ENCODE measurements at regions of chrX and their contacts with region 1.

Region 1: GRCh38 chrX:17876164-17876563 is 15.1 kb upstream of the RAI2 start:
- DNase-seq: peak; percentile 43
- ATAC-seq: peak; percentile 8; the same call in 1 of the 2 replicates
- H3K4me3 ChIP-seq: no peak overlapping the region
- H3K27ac ChIP-seq: no peak overlapping the region
- H3K4me1 ChIP-seq: peaks cover 41% of the 10 kb centered on the region
- H3K27me3 ChIP-seq: no peaks in the 10 kb centered on the region
- CTCF ChIP-seq: 0 out of 2 replicates have a peak, but pooled peaks have one; percentile 19

Region 2: GRCh38 chrX:17697191-17697590 is 179.0 kb before region 1 on chrX:
- CTCF ChIA-PET with region 1: no interaction called
- POLR2A ChIA-PET with region 1: no interaction called
- intact Hi-C with region 1: loop called (anchors 5 kb)
- DNase-seq: peak; percentile 44
- ATAC-seq: peak; percentile 42
- H3K4me3 ChIP-seq: no peak overlapping the region
- H3K27ac ChIP-seq: no peak overlapping the region
- H3K4me1 ChIP-seq: peaks cover 29% of the 10 kb centered on the region
- H3K27me3 ChIP-seq: no peaks in the 10 kb centered on the region
- CTCF ChIP-seq: peak; percentile 53

Region 3: GRCh38 chrX:17788439-17788838 is 87.7 kb before region 1 on chrX:
- CTCF ChIA-PET with region 1: interaction called, 4 read pairs
- POLR2A ChIA-PET with region 1: interaction called, 3 read pairs
- intact Hi-C with region 1: loop called (anchors 5 kb)
- DNase-seq: peak; percentile 74
- ATAC-seq: peak; percentile 88
- H3K4me3 ChIP-seq: no peak overlapping the region
- H3K27ac ChIP-seq: no peak overlapping the region
- H3K4me1 ChIP-seq: peaks cover 11% of the 10 kb centered on the region; the same call in 1 of the 2 replicates
- H3K27me3 ChIP-seq: no peaks in the 10 kb centered on the region
- CTCF ChIP-seq: peak; percentile 87

Region 4: DNA sequence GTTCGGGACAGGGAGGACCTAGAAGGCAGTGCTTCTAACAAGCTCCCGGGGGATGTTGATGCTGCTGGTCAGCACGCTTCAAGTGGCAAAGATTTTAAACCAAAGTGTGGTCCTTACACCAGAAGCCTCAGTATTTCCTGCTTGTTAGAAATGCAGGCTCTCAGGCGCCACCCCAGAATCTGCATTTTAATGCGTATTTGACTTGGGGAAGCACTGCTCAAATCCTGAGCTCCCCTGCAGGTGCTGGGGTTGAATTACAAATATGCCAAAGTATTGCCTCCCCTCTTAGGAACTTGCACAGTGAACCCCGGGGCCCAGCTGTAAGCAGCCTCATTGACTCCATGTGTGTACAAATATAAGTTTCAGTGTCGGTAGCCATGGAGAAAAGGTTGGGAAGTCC is 55.7 kb after region 1 on chrX:
- CTCF ChIA-PET with region 1: no interaction called
- POLR2A ChIA-PET with region 1: no interaction called
- intact Hi-C with region 1: loop called (anchors 2 kb)
- DNase-seq: no peak
- ATAC-seq: no peak
- H3K4me3 ChIP-seq: no peak overlapping the region
- H3K27ac ChIP-seq: no peak overlapping the region
- H3K4me1 ChIP-seq: peaks cover 20% of the 10 kb centered on the region
- H3K27me3 ChIP-seq: no peaks in the 10 kb centered on the region
- CTCF ChIP-seq: no peak